Dorsolateral prefrontal cortex (tissue), 120 donors: ENCODE measurements at regions of chr3 and their contacts with region 1.

Region 1: DNA sequence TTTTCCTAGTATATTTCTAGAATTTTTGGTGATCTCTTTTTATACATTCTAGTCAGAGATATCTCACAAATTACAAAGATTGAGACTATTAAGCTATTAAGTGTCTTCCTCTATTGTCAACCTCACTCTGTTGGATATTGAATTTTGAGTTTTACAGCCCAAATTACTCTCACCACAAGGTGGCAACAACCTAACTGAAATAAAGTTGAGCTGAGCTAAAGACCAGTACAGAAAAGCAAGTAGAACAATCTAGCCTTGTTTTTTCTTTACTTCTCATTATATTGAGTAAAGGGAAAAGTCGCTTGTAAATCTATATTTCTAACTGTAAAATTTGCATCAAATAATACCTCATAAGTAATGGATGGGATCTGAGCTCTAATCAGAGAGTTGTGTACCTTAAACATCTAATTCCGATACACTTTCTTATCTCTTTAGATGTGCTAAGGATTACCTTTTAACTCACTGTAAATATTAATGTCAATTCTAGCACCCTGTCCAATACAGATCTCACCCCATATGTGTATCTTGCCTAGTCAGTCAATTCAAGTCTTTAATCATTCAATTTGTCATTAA is 13.6 kb upstream of the COMMD2 start:
- DNase-seq: no peak
- H3K4me3 ChIP-seq: no peak overlapping the region
- H3K27ac ChIP-seq: peak overlapping the region in 56 of 59 donors; percentile 73 to 99 (median 94)
- H3K27me3 ChIP-seq: no peaks in the 10 kb centered on the region
- CTCF ChIP-seq: peak; percentile 68 to 96 (median 80)

Region 2: DNA sequence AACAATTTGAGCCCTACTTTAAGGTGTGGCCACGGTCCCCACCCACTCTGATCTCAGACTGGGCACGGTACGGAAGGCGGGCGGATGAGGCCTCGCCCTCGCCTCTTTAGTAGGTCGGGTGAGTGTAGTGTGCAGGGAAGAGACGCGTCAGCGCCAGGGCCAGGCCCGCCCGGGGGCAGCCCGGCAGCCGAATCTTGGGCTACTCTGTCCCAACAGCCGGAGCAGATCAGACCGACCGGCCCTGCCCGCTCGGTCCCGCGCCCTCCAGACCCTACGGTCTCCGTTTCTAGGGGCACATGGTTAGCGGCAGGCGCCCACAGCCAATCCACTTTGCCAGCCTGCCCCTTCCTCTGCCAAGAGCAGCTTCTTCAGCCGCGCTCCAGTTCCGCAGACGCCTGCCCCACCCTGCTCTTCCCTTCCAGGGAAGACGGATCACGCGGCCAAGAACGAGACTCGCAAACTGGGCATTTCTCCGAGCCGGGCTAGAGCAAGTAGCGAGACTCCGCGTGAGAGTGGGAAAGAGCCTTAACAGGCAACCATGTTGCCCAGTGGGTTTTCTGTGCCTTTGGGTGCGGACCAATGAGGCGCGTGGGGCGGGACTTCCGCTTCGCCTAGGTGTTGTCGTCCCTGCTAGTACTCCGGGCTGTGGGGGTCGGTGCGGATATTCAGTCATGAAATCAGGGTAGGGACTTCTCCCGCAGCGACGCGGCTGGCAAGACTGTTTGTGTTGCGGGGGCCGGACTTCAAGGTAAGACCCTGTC is 46.9 kb after region 1 on chr3 and contains the start of gene RNF13:
- intact Hi-C with region 1: loop called (anchors 1 to 2 kb)
- DNase-seq: peak; percentile 98 to 100 (median 99)
- H3K4me3 ChIP-seq: peak within 1 kb of the TSS; percentile 53 to 96 (median 88)
- H3K27ac ChIP-seq: peak within 1 kb of the TSS; percentile 95 to 100 (median 99)
- H3K27me3 ChIP-seq: no peaks in the 10 kb centered on the region
- CTCF ChIP-seq: peak in 7 of 56 donors; percentile 6 to 38 (median 13)
- total RNA-seq, gene RNF13: 80.2 to 336 (median 136) TPM

Region 3: GRCh38 chr3:149879872-149880271 is 114.0 kb after region 1 on chr3:
- intact Hi-C with region 1: loop called in 1 of 2 experiments (anchors 10 kb)
- DNase-seq: peak in 8 of 10 donors; percentile 24 to 84 (median 65)
- H3K4me3 ChIP-seq: no peak overlapping the region
- H3K27ac ChIP-seq: peak overlapping the region in 9 of 59 donors; percentile 1 to 53 (median 35)
- H3K27me3 ChIP-seq: no peaks in the 10 kb centered on the region
- CTCF ChIP-seq: peak; percentile 36 to 82 (median 64)

Region 4: DNA sequence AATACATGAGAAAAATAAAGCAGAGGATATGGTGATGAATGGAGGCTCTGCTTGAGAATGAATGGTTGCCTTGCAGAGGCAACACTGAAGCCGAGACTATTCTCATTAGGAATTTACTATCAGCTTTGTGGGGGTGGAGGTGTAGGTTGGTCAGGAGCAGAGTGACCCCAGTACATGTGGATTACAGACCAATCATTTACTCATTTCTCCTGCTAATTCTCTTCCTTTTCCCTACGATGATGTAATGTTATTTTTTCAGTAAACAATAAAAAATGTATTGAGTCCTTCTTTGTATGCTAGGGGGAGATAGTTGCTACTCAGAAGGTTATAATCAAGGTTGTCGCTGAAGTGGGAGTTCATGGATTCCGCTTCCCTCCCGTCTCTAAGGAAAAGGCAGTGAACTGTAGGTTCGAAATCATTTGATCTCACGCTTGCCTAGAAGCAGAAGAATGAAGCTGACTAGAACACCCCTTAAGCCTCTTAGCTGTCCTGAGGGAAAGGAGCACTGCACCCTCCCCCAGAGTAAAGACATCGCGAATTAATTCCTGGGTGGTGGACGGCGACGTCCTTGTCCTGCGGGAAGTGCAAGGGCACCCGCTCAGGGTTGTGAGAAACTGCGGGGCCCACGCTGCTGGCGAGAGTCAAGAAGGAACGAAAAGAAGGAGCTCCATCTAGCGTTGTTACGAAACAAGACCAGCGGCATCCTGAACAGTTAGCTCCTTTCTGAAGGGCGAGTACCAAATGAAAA is 418.0 kb after region 1 on chr3:
- intact Hi-C with region 1: loop called (anchors 5 to 10 kb)
- DNase-seq: peak; percentile 55 to 82 (median 78)
- H3K4me3 ChIP-seq: peak overlapping the region; percentile 23 to 68 (median 51)
- H3K27ac ChIP-seq: peak overlapping the region in 41 of 59 donors; percentile 5 to 86 (median 53)
- H3K27me3 ChIP-seq: no peaks in the 10 kb centered on the region
- CTCF ChIP-seq: peak; percentile 43 to 94 (median 82)

Region 5: DNA sequence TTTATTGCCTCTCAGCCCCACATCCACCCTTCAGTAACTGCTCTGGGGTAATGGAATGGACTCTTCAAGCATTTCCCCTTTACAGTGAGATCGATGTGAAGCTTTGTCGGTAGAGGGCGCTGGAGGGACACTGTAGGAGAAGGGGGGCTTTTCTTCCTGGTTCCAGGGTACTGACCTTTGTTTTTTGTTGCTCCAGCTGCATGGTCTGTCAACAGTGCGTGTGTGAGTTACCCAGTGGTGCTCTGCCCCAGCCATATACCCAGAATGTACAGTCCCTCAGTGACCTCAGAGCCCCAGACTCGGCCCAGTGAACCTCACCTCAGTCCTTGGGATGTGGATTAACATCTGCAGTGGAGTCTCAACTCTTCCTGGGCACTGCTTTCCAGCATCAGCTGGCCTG is 462.0 kb after region 1 on chr3:
- intact Hi-C with region 1: loop called in 1 of 2 experiments (anchors 10 kb)
- DNase-seq: peak in 2 of 10 donors; percentile 44 to 63
- H3K4me3 ChIP-seq: no peak overlapping the region
- H3K27ac ChIP-seq: no peak overlapping the region
- H3K27me3 ChIP-seq: no peaks in the 10 kb centered on the region
- CTCF ChIP-seq: peak in 55 of 56 donors; percentile 20 to 79 (median 63)